Activated naive CD4-positive, alpha-beta T cell treated with anti-CD3 and anti-CD28 coated beads, Interleukin-2, amount 10 ng/mL, durations not matched to agents 7 days and 5 days (primary cell): ENCODE measurements at regions of chr21 and their contacts with region 1.

Region 1: DNA sequence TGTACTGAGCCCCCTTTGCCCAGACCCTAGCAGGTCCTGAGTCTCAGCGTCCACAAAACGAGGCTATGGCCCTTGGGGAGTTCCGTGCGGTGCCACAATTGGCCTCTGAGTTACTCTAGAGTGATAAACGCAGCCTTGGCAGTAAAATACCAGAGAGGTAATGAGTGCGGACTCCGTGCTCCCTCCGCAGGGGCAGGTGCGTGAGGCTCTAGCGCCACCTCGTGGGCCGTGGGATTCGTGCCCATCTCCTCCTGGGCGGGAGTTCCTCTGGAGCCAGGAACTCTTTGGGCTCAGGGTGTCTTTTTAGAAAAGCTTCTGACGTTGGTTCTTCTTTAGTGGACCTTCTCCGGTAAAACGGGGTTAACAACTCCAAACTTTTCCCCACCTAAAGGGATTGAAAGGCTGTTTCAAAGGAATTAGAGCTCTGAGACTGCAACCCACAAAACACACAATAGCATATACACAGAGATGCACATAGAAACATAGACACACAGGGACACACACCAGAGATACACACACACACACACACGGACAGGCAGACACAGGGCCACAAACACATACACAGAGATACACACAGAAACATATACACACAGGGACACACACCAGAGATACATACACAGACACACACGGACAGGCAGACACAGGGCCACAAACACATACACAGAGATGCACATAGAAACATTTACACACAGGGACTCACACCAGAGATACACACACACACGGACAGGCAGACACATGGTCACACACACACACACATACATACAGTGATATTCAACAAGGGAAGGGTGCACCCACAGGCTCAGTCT is 99.4 kb downstream of the KCNJ15 start:
- DNase-seq: peak; percentile 80
- H3K4me3 Mint-ChIP-seq: no peak overlapping the region
- H3K27ac Mint-ChIP-seq: no peak overlapping the region
- H3K4me1 Mint-ChIP-seq: peaks cover 12% of the 10 kb centered on the region
- H3K27me3 Mint-ChIP-seq: peaks cover 16% of the 10 kb centered on the region

Region 2: GRCh38 chr21:38170280-38170679 is 185.9 kb before region 1 on chr21:
- CTCF ChIA-PET with region 1: interaction called, 92 read pairs
- DNase-seq: peak; percentile 26
- H3K4me3 Mint-ChIP-seq: no peak overlapping the region
- H3K27ac Mint-ChIP-seq: no peak overlapping the region
- H3K4me1 Mint-ChIP-seq: no peaks in the 10 kb centered on the region
- H3K27me3 Mint-ChIP-seq: no peaks in the 10 kb centered on the region

Region 3: GRCh38 chr21:38244885-38245545 is 111.2 kb before region 1 on chr21:
- CTCF ChIA-PET with region 1: interaction called, 21 read pairs
- DNase-seq: peak; percentile 79
- H3K4me3 Mint-ChIP-seq: no peak overlapping the region
- H3K27ac Mint-ChIP-seq: peak overlapping the region; percentile 39
- H3K4me1 Mint-ChIP-seq: peaks cover 40% of the 10 kb centered on the region
- H3K27me3 Mint-ChIP-seq: peaks cover 18% of the 10 kb centered on the region

Region 4: GRCh38 chr21:38289705-38290485 is 66.3 kb before region 1 on chr21:
- CTCF ChIA-PET with region 1: interaction called, 15 read pairs
- DNase-seq: no peak
- H3K4me3 Mint-ChIP-seq: no peak overlapping the region
- H3K27ac Mint-ChIP-seq: no peak overlapping the region
- H3K4me1 Mint-ChIP-seq: peaks cover 12% of the 10 kb centered on the region
- H3K27me3 Mint-ChIP-seq: no peaks in the 10 kb centered on the region

Region 5: DNA sequence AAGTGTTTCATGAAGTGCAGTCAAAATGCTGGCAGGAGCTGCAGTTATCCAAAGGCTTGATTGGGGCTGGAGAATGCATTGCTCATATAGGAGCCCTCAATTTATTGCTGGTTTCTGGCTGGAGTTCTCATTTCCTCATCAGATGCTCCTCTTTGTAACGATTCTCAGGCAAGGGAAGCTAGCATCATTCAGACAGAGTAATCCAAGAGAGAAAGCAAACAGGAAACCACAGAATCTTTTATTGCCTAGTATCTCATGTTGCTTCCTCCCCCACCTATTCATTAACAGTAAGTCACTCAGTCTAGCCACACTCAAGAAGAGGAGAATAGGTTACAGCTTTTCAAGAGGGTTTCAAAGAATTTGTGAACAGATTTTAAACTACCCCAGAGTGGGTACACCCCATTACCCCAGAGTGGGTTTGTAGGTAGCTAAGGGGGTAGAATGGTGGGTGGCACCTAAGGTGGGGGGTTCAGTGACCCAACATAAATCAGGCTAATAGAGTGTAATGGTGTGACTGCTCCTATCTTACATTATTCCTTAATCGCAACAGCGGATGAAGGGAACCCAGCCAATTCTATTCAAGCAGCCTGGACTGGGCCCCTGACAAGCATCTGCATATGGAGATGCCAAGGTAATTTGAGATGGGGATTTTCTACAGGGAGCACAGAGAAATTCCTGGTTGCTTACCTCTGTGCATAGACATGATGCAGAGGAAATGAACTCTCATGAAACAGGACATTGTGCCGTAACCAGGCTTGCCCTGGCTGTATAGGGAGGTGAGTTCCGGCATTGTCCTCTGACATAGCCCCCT is 32.3 kb before region 1 on chr21:
- CTCF ChIA-PET with region 1: interaction called, 27 read pairs
- DNase-seq: no peak
- H3K4me3 Mint-ChIP-seq: no peak overlapping the region
- H3K27ac Mint-ChIP-seq: peak overlapping the region; percentile 19
- H3K4me1 Mint-ChIP-seq: peaks cover 22% of the 10 kb centered on the region
- H3K27me3 Mint-ChIP-seq: no peaks in the 10 kb centered on the region

Region 6: GRCh38 chr21:38392661-38393060 is 36.5 kb after region 1 on chr21:
- CTCF ChIA-PET with region 1: no interaction called
- DNase-seq: no peak
- H3K4me3 Mint-ChIP-seq: no peak overlapping the region
- H3K27ac Mint-ChIP-seq: no peak overlapping the region
- H3K4me1 Mint-ChIP-seq: no peaks in the 10 kb centered on the region
- H3K27me3 Mint-ChIP-seq: peaks cover 4% of the 10 kb centered on the region

Region 7: DNA sequence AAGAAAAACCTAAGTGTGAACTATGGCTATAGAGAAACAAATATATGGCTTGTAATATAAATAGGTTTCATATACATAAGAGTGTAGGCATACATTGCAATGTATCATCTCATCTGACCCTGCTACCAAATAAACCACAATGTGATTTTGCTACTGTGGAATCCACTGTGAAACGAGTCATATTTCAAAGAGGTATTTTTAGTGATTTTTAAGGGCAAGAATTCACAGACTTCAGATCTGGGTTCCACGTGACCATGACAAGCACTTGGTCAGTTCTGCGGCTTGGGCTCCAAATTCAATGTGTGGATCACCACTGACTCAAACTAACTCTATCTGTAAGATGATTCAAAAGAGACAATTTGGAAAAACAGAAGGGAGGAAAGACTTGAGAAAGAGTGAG is 289.1 kb after region 1 on chr21:
- CTCF ChIA-PET with region 1: no interaction called
- DNase-seq: no peak
- H3K4me3 Mint-ChIP-seq: no peak overlapping the region
- H3K27ac Mint-ChIP-seq: no peak overlapping the region
- H3K4me1 Mint-ChIP-seq: no peaks in the 10 kb centered on the region
- H3K27me3 Mint-ChIP-seq: peaks cover 21% of the 10 kb centered on the region